ENCODE measurements at regions of chr4 and their contacts with region 1.

Region 1: GRCh38 chr4:145148980-145149379 is 31.4 kb downstream of the OTUD4 start:
- DNase-seq: no peak
- ATAC-seq: no peak
- H3K4me3 ChIP-seq: no peak overlapping the region
- H3K27ac ChIP-seq: no peak overlapping the region
- H3K4me1 ChIP-seq: peaks cover 0 to 19% (median 6%) of the 10 kb centered on the region in 9 donors
- H3K27me3 ChIP-seq: no peaks in the 10 kb centered on the region
- CTCF ChIP-seq: no peak

Region 2: GRCh38 chr4:145107126-145107525 is 41.9 kb before region 1 on chr4:
- intact Hi-C with region 1: loop called in 2 of 10 experiments (anchors 5 kb)
- DNase-seq: no peak
- ATAC-seq: no peak
- H3K4me3 ChIP-seq: no peak overlapping the region
- H3K27ac ChIP-seq: peak overlapping the region in 1 of 10 donors; percentile 13
- H3K4me1 ChIP-seq: peaks cover 0 to 36% (median 11%) of the 10 kb centered on the region in 9 donors
- H3K27me3 ChIP-seq: no peaks in the 10 kb centered on the region
- CTCF ChIP-seq: no peak

Measured in heart right ventricle (tissue), 16 donors.